ENCODE measurements at regions of chr9 and their contacts with region 1.

Region 1: DNA sequence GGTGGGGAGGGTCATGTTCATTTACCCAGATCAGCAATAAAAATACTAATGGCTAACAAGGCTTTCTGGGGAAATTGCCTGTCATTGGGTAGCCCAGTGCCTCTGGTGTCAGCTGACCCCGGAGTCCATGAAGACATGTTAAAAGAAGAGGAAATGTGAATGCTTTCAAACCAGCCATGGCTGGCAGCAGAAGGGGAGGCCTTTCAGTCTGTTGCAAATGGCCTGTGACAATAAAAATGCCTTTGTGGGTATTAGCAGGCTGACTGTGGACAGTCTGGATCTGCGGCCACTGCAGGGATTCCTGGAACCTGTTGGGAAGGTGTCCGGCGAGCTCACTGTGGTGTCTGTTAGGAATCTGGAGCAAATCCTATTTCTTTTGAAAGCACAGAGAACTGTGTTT is 7.5 kb downstream of the ABL1 start:
- DNase-seq: no peak
- H3K4me3 ChIP-seq: no peak overlapping the region
- H3K27ac ChIP-seq: no peak overlapping the region
- H3K4me1 ChIP-seq: peaks cover 5 to 33% (median 16%) of the 10 kb centered on the region in 4 experiments
- H3K27me3 ChIP-seq: no peaks in the 10 kb centered on the region
- CTCF ChIP-seq: no peak
- EP300 ChIP-seq: no peak
- POLR2A ChIP-seq: no peak
- RAD21 ChIP-seq: no peak

Region 2: DNA sequence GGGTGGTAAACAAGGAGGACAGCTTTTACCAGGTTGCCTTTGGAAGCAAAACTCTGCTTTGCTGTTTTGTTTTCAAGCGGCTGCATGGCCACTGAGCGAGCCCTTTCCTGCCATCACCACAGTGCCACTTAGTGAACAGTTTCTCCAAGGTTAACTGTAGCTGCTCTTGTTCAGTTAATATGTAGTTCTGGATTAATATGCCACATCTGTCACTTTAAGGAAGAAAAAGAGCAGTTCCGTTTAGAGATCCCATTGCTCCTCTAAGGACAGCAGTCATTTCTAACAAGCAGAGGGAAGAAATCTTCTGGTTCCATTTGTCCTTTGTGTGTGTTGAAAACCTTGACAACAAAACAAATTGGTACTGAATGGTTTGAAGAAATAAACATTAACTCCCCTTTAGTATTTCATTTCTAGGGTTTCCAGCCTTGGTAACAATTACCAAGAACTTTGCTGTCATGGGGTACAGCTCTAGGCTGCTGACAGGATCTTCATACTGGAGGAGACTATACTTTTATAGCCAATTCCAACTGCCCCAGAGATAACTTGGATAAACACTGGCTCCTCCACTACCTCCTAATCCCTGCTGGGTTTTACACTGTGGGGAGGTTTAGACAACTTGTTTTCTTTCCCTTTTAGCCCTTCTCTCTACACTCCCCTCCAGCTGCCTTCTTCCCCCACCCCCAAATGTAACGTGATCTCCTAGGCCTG is 17.7 kb before region 1 on chr9:
- CTCF ChIA-PET with region 1: interaction called, 11 read pairs
- POLR2A ChIA-PET with region 1: interaction called, 10 read pairs
- DNase-seq: peak in 1 of 2 experiments; percentile 43
- H3K4me3 ChIP-seq: peak overlapping the region in 2 of 4 experiments; percentile 1 to 40; a peak in 4 of 8 replicates
- H3K27ac ChIP-seq: peak overlapping the region; percentile 68
- H3K4me1 ChIP-seq: peaks cover 11 to 28% (median 18%) of the 10 kb centered on the region in 4 experiments
- H3K27me3 ChIP-seq: no peaks in the 10 kb centered on the region
- CTCF ChIP-seq: no peak
- EP300 ChIP-seq: peak in 1 of 2 experiments; percentile 29; a peak in 1 of 3 replicates
- POLR2A ChIP-seq: no peak
- RAD21 ChIP-seq: no peak

Region 3: DNA sequence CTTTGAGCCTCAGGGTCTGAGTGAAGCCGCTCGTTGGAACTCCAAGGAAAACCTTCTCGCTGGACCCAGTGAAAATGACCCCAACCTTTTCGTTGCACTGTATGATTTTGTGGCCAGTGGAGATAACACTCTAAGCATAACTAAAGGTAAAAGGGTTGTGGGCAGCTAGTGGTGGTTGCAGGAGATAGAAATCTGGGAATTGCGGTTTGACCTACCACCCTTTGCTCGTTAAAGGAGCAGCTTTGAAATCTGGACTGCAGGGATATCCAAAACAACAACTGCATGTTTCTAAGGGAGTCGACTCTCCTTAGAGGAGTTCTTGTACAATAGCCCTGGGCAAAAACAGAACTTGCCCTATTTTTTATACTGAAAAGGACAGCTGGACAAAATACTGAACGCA is 11.5 kb after region 1 on chr9:
- CTCF ChIA-PET with region 1: interaction called, 15 read pairs
- POLR2A ChIA-PET with region 1: interaction called, 8 read pairs
- DNase-seq: no peak
- H3K4me3 ChIP-seq: no peak overlapping the region
- H3K27ac ChIP-seq: no peak overlapping the region
- H3K4me1 ChIP-seq: no peaks in the 10 kb centered on the region
- H3K27me3 ChIP-seq: no peaks in the 10 kb centered on the region
- CTCF ChIP-seq: no peak
- EP300 ChIP-seq: no peak
- POLR2A ChIP-seq: no peak
- RAD21 ChIP-seq: no peak

Measured in H1 (cell line).